ENCODE measurements at regions of chr22 and their contacts with region 1.

Region 1: GRCh38 chr22:24244101-24244787 is 638 bp downstream of the GGT5 start:
- DNase-seq: no peak
- ATAC-seq: no peak
- H3K4me3 Mint-ChIP-seq: no peak overlapping the region
- H3K27ac Mint-ChIP-seq: no peak overlapping the region
- H3K4me1 Mint-ChIP-seq: peaks cover 21% of the 10 kb centered on the region
- H3K27me3 Mint-ChIP-seq: no peaks in the 10 kb centered on the region
- CTCF ChIP-seq: no peak

Region 2: DNA sequence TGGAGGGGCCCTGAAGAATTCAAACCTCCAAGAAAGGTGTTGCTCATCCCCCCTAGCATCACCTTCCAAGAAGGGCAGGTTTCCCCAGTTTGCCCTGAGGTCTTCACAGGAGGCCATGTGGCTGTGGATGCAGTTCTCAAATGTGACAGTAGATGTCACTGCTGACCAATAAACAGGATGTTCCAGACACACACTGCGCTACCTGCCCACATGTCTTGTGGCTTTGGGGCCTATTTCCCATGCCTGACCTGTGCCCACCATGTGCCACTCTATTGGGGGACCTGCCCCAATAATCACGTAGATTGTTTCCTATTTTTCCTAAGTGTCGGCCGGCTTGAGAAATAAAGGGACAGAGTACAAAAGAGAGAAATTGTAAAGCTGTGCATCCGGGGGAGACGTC is 259.8 kb before region 1 on chr22:
- CTCF ChIA-PET with region 1: no interaction called
- POLR2A ChIA-PET with region 1: no interaction called
- intact Hi-C with region 1: loop called (anchors 5 kb)
- DNase-seq: no peak
- ATAC-seq: peak; percentile 91
- H3K4me3 Mint-ChIP-seq: no peak overlapping the region
- H3K27ac Mint-ChIP-seq: no peak overlapping the region
- H3K4me1 Mint-ChIP-seq: no peaks in the 10 kb centered on the region
- H3K27me3 Mint-ChIP-seq: no peaks in the 10 kb centered on the region
- CTCF ChIP-seq: no peak

Region 3: DNA sequence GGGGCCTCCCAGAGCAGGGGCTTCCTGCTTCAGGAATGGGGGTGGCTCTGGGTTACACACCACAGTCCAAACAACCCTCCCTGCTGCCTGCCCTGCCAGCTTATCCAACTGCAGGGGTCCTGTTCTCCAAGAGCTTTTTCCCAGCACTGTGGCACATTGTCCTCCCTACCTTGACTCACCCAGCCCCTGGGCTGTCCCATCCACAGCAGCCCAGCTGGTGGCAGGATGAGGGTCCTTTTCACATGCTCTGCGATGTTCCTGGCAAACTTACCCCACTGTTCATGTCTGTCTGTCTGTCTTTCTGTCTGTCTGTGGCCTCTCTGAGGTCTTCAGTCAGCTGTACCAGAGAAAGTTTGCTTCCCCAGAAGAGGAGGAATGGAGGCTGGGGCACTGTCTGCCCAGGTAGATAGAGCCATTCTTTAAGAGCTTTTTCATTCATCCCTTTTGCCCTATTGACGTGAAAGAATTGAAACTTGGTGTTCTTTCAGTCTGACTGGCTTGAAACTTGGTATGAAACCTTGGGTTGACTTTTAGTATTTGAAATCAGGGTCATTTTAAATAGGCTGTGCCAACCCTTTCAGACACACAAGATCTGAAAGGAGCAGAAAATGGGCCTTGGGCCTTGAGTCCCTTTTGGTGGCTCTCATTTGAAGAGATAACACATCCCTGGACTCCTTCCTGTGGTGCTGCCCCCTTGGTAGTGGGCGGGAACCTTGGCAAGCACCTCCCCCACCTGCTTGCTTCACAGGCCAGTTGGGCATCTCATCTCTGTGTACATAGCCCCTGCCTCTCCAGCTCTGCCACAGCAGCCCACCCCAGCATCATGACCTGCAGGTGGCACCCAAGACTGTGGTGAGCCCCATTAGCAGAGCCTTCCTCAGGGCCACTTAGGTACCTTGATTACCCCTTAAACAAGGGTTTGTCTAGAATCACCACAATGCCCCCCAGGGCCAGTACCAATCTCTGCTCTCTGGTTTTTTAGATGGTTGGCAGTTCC is 137.6 kb before region 1 on chr22:
- CTCF ChIA-PET with region 1: interaction called, 6 read pairs
- POLR2A ChIA-PET with region 1: no interaction called
- intact Hi-C with region 1: loop called (anchors 5 kb)
- DNase-seq: peak; percentile 23
- ATAC-seq: peak; percentile 78
- H3K4me3 Mint-ChIP-seq: no peak overlapping the region
- H3K27ac Mint-ChIP-seq: no peak overlapping the region
- H3K4me1 Mint-ChIP-seq: no peaks in the 10 kb centered on the region
- H3K27me3 Mint-ChIP-seq: no peaks in the 10 kb centered on the region
- CTCF ChIP-seq: no peak

Region 4: GRCh38 chr22:24189249-24190158 is 54.7 kb before region 1 on chr22:
- CTCF ChIA-PET with region 1: interaction called, 5 read pairs
- POLR2A ChIA-PET with region 1: no interaction called
- intact Hi-C with region 1: loop called (anchors 5 kb)
- DNase-seq: peak; percentile 33
- ATAC-seq: peak; percentile 83
- H3K4me3 Mint-ChIP-seq: no peak overlapping the region
- H3K27ac Mint-ChIP-seq: no peak overlapping the region
- H3K4me1 Mint-ChIP-seq: no peaks in the 10 kb centered on the region
- H3K27me3 Mint-ChIP-seq: peaks cover 3% of the 10 kb centered on the region
- CTCF ChIP-seq: no peak

Region 5: DNA sequence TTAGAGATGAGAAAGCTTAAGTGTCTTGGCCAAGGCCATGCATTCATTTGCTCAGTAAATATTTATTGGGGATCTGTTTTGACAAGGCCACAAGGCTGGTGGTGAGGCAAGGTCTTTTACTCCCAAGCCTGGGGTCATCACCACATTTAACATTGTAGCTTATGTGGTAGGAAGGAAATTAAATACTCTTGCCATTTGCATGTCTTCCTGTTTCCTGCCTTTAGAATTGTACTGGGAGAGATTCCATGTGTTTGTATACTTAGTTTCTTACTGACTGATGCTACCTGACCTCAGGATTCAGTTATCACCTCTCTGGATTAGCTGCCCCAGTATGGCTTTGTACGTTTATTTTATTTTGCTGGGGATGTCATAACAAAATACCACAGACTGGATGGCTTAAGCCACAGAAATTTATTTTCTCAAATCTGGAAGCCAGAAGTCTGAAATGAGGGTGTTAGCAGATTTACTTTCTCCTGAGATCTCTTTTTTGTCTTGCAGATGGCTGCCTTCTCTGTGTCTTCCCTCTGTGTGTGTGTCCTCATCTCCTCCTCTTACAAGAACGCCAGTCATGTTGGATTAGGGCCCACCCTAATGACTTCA is 71.2 kb after region 1 on chr22:
- CTCF ChIA-PET with region 1: no interaction called
- POLR2A ChIA-PET with region 1: no interaction called
- intact Hi-C with region 1: no loop called
- DNase-seq: no peak
- ATAC-seq: no peak
- H3K4me3 Mint-ChIP-seq: no peak overlapping the region
- H3K27ac Mint-ChIP-seq: no peak overlapping the region
- H3K4me1 Mint-ChIP-seq: no peaks in the 10 kb centered on the region
- H3K27me3 Mint-ChIP-seq: no peaks in the 10 kb centered on the region
- CTCF ChIP-seq: no peak